ENCODE measurements at regions of chr15 and their contacts with region 1.

Region 1: GRCh38 chr15:90648137-90649070 is 68.7 kb upstream of the BLM start:
- DNase-seq: peak; percentile 69
- ATAC-seq: peak; percentile 89
- H3K4me3 ChIP-seq: no peak overlapping the region
- H3K27ac ChIP-seq: peak overlapping the region; percentile 38; the same call in 1 of the 2 replicates
- H3K4me1 ChIP-seq: peaks cover 6% of the 10 kb centered on the region
- H3K27me3 ChIP-seq: no peaks in the 10 kb centered on the region
- CTCF ChIP-seq: peak; percentile 92
- POLR2A ChIP-seq: peak; percentile 52; the same call in 1 of the 2 replicates
- RAD21 ChIP-seq: peak; percentile 95

Region 2: GRCh38 chr15:90691982-90692773 is 43.8 kb after region 1 on chr15:
- CTCF ChIA-PET with region 1: interaction called, 4 read pairs
- POLR2A ChIA-PET with region 1: no interaction called
- dilution Hi-C with region 1: no loop called
- in situ Hi-C with region 1: loop called (anchors 10 kb)
- intact Hi-C with region 1: loop called (anchors 1 kb)
- DNase-seq: no peak
- ATAC-seq: no peak
- H3K4me3 ChIP-seq: no peak overlapping the region
- H3K27ac ChIP-seq: no peak overlapping the region
- H3K4me1 ChIP-seq: no peaks in the 10 kb centered on the region
- H3K27me3 ChIP-seq: no peaks in the 10 kb centered on the region
- CTCF ChIP-seq: no peak
- POLR2A ChIP-seq: no peak
- RAD21 ChIP-seq: no peak

Region 3: GRCh38 chr15:90859234-90860131 is 211.1 kb after region 1 on chr15:
- CTCF ChIA-PET with region 1: no interaction called
- POLR2A ChIA-PET with region 1: no interaction called
- dilution Hi-C with region 1: no loop called
- in situ Hi-C with region 1: no loop called
- intact Hi-C with region 1: no loop called
- DNase-seq: no peak
- ATAC-seq: peak; percentile 62
- H3K4me3 ChIP-seq: no peak overlapping the region
- H3K27ac ChIP-seq: no peak overlapping the region
- H3K4me1 ChIP-seq: peaks cover 6% of the 10 kb centered on the region
- H3K27me3 ChIP-seq: no peaks in the 10 kb centered on the region
- CTCF ChIP-seq: no peak
- POLR2A ChIP-seq: no peak
- RAD21 ChIP-seq: no peak

Region 4: DNA sequence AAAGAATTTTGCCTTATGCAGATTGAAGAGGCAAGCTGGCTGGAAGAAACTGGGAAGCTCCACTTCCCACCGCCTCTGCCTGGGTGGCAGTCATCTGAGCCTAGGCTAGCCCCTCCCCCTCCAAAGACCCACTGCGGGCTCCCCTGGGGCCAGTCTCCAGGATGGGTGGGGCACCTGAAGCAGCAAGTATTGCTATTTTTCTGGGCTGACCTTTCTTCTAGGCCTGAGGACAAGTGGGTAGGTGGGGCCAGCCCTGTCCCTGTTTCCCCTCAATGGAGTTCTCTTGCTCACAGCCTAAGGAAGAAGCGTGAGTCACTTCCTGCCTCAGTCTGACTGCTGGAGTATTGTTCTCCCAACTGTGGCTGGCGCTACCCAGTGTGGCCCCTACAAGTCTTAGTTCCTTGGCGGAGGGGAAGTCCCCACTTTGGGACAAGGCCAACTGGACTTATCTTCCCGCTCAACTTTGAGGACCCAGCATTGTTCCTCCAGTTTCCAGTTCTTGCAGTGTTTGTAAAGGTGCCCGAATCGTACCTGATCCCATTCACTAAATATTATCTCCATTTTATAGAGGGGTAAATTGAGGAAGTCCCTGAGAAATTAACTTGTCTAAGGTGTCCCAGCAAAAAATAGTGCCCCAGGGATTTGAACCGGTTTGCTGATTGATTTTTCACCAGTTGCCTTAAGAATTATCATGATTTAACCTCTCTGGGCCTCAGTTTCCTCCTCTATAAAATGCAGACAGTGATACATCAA is 221.4 kb after region 1 on chr15:
- CTCF ChIA-PET with region 1: no interaction called
- POLR2A ChIA-PET with region 1: no interaction called
- dilution Hi-C with region 1: no loop called
- in situ Hi-C with region 1: no loop called
- intact Hi-C with region 1: loop called (anchors 5 kb)
- DNase-seq: peak; percentile 84
- ATAC-seq: peak; percentile 24
- H3K4me3 ChIP-seq: no peak overlapping the region
- H3K27ac ChIP-seq: peak overlapping the region; percentile 48
- H3K4me1 ChIP-seq: peaks cover 33% of the 10 kb centered on the region
- H3K27me3 ChIP-seq: no peaks in the 10 kb centered on the region; the same call in 1 of the 2 replicates
- CTCF ChIP-seq: no peak
- POLR2A ChIP-seq: no peak
- RAD21 ChIP-seq: no peak

Region 5: GRCh38 chr15:90934791-90935751 is 286.7 kb after region 1 on chr15 and contains the start of gene UNC45A:
- CTCF ChIA-PET with region 1: interaction called, 6 read pairs
- POLR2A ChIA-PET with region 1: no interaction called
- dilution Hi-C with region 1: no loop called
- in situ Hi-C with region 1: no loop called
- intact Hi-C with region 1: loop called (anchors 1 kb)
- DNase-seq: peak; percentile 77
- ATAC-seq: peak; percentile 89
- H3K4me3 ChIP-seq: peak within 1 kb of the TSS; percentile 76
- H3K27ac ChIP-seq: peak within 1 kb of the TSS; percentile 79
- H3K4me1 ChIP-seq: peaks cover 9% of the 10 kb centered on the region
- H3K27me3 ChIP-seq: no peaks in the 10 kb centered on the region
- CTCF ChIP-seq: no peak
- POLR2A ChIP-seq: 0 out of 2 replicates have a peak, but pooled peaks have one; percentile 62
- RAD21 ChIP-seq: no peak
- total RNA-seq, gene UNC45A: 85.3 and 100 TPM in 2 replicates